ENCODE measurements at regions of chr15 and their contacts with region 1.

Region 1: GRCh38 chr15:62658498-62658897 is 384.0 kb upstream of the TPM1 start:
- DNase-seq: no peak
- H3K4me3 Mint-ChIP-seq: no peak overlapping the region
- H3K27ac Mint-ChIP-seq: no peak overlapping the region
- H3K4me1 Mint-ChIP-seq: no peaks in the 10 kb centered on the region
- H3K27me3 Mint-ChIP-seq: no peaks in the 10 kb centered on the region
- CTCF ChIP-seq: no peak

Region 2: DNA sequence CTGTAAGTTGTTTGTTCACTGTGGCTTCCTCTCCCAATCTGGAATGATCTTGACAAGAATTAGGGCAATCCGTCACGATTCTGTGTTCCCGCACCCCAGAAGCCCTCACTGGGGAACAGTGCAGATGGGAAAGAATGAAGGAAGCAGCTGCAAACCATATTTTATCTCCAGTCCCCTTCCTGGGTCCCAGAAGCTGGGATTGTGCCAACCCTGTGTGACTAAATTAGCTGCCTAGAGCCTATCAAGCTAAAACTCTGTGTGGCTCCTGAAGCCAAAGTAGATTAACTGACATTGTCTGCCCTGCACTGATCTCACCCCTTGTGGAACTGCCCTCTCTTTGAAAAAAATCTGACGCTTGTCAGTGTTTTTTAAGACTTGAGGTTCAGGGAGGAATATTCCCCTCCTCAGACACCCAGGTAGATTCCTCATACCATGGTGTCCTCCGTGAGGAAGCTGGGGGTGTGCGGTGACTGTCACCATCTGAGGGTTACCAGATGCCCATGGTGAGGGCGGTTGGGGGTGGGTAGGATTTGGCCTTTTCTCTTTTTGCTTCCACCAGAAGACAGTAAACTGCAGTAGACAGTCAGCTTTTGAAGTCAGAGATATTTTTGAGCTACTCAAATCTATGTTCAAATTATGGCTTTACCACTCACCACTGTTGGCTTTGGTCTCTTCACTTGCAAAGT is 25.8 kb after region 1 on chr15:
- CTCF ChIA-PET with region 1: no interaction called
- intact Hi-C with region 1: loop called (anchors 1 kb)
- DNase-seq: no peak
- H3K4me3 Mint-ChIP-seq: no peak overlapping the region
- H3K27ac Mint-ChIP-seq: no peak overlapping the region
- H3K4me1 Mint-ChIP-seq: no peaks in the 10 kb centered on the region
- H3K27me3 Mint-ChIP-seq: no peaks in the 10 kb centered on the region
- CTCF ChIP-seq: no peak

Measured in Calu3 (cell line).